CD14-positive monocyte (primary cell): ENCODE measurements at regions of chr22 and their contacts with region 1.

Region 1: GRCh38 chr22:30212363-30212995 is 34.1 kb downstream of the LIF start:
- DNase-seq: peak; percentile 92 to 97 (median 95)
- H3K4me3 ChIP-seq: peak overlapping the region in 1 of 3 experiments; percentile 41
- H3K4me3 Mint-ChIP-seq: peak overlapping the region in 1 of 2 donors; percentile 55
- H3K27ac ChIP-seq: peak overlapping the region; percentile 86 to 94
- H3K27ac Mint-ChIP-seq: peak overlapping the region; percentile 97 to 98 (median 97)
- H3K4me1 ChIP-seq: peaks cover 25 to 39% of the 10 kb centered on the region in 2 donors
- H3K4me1 Mint-ChIP-seq: peaks cover 46% of the 10 kb centered on the region
- H3K27me3 ChIP-seq: no peaks in the 10 kb centered on the region
- H3K27me3 Mint-ChIP-seq: peaks cover 6 to 18% (median 10%) of the 10 kb centered on the region in 3 donors
- CTCF ChIP-seq: no peak

Region 2: DNA sequence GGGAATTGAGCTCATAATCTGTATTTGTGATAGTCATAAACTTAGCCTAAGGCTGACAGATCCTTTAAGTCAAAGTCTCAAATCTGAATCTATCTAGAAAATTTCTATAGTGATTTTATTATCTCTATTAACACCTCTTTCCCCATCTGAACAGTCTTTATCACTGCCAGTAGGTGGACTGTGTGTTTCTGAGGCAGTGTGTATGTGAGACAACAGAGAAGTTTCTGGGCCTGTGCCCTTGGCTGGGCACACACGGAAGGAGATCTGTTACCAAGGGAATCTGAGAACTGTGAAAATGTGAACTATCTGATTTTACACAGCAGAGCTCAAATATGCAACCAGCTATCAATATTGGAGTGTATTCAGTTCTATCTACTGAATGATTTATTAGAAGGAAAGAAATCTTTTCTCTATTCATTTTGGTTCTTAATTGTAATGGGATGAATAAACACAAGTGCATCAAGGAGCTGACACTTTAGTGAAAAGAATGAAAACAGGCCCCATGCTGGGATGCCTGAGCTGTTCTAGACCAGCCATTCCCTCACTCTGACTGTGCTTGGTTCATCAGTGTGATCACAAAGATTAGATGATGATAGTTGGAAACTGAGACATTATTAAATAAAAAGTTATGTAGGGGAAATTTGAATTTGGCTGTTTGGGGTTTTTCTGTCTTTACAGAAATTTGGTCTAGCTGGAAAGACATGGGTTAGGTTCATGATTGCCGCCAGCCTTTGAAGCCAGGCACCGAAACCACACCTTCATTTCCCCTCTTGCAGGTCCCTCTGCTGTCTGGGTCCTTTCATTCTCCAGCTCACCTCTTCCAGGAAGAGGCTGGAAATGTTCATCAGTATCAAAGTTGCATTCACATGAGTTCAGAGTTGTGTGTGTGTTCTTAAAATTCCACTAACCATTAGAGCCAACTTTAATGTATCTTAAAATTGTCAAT is 34.0 kb before region 1 on chr22:
- intact Hi-C with region 1: loop called (anchors 5 kb)
- DNase-seq: no peak
- H3K4me3 ChIP-seq: no peak overlapping the region
- H3K4me3 Mint-ChIP-seq: no peak overlapping the region
- H3K27ac ChIP-seq: no peak overlapping the region
- H3K27ac Mint-ChIP-seq: peak overlapping the region in 2 of 7 donors; percentile 37 to 48
- H3K4me1 ChIP-seq: peaks cover 0 to 2% of the 10 kb centered on the region in 2 donors
- H3K4me1 Mint-ChIP-seq: peaks cover 11% of the 10 kb centered on the region
- H3K27me3 ChIP-seq: no peaks in the 10 kb centered on the region
- H3K27me3 Mint-ChIP-seq: peaks cover 0 to 5% (median 3%) of the 10 kb centered on the region in 3 donors
- CTCF ChIP-seq: no peak

Region 3: DNA sequence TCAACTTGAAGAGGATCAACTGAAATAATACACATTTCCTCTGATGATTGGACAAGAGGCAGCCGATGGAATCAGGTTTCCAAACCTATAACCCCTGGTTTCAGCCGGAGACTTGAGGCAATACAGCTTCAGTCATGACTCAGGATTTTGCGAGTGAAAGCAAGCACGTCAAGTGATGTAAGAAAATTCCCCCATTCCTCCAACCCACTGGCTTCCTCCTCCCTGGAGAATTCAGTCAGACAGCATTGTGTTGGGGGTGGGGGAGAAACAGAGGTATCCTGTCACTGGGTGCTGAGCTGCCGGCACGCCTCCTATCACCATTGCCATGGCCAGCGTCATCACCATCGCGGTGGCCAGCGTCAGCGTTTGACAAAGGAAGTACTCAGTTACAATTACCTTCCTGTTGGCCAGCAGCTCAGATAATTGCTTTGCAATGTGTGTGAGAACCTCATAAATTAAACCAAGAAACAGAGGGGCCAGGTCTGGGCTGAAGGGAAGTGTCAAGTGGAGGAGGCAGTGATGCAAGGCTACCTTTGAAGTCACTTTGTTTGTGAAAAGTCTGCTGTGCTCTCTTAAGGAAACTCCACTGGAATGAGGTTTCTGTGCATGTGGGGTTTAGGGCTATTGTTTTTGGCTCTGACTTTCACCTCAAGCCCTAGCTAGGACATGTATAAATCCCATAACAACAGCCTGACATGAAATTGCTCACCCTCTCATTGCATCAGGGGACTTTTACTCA is 16.2 kb before region 1 on chr22:
- intact Hi-C with region 1: loop called (anchors 2 kb)
- DNase-seq: peak; percentile 99 to 100 (median 99)
- H3K4me3 ChIP-seq: peak overlapping the region in 1 of 3 experiments; percentile 23
- H3K4me3 Mint-ChIP-seq: peak overlapping the region in 1 of 2 donors; percentile 84
- H3K27ac ChIP-seq: peak overlapping the region; percentile 87 to 96
- H3K27ac Mint-ChIP-seq: peak overlapping the region; percentile 95 to 99 (median 98)
- H3K4me1 ChIP-seq: peaks cover 53 to 54% of the 10 kb centered on the region in 2 donors
- H3K4me1 Mint-ChIP-seq: peaks cover 58% of the 10 kb centered on the region
- H3K27me3 ChIP-seq: no peaks in the 10 kb centered on the region
- H3K27me3 Mint-ChIP-seq: peaks cover 0 to 4% (median 4%) of the 10 kb centered on the region in 3 donors
- CTCF ChIP-seq: no peak

Region 4: DNA sequence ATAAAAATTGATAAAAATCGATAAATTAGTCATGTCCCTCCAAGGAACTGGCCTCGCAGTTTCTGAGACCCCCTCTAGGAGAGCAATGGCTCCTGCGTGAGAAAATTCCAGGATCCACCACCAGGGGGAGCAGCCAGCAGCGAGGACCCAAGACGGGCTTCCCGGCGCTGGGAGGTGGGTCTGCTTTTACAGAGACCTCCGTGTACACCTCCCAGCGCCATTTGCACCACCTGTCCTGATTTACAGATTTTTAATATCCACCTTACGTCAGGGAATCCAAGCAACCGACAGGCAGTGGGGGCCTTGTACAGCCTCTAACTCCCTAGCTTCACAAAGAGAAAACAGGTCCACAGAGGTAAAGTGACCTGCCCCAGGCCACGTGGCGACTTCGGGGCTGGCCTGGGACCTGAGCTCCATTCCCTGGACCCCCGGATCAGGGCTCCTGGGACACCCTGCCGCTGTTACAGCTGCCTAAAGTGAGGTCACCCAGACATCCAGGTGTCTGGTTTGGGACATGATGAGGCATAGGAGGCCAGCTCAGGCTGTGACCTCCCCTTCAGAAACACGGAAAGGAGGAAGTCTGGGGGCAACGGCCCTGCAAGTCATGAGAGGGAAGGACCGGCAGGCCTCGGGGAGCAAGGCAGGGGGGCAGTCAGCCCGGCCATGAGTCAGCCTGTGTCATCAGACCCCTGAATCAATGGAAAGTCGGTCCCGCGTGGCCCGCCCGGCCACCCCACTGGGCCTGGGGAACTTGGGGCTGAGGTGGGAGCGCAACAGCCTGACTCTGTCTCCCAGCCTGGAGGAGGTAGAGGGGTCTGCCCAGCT is 50.6 kb after region 1 on chr22:
- intact Hi-C with region 1: loop called (anchors 2 to 5 kb)
- DNase-seq: peak; percentile 98 to 100 (median 98)
- H3K4me3 ChIP-seq: peak overlapping the region in 1 of 3 experiments; percentile 56
- H3K4me3 Mint-ChIP-seq: peak overlapping the region; percentile 78 to 94
- H3K27ac ChIP-seq: peak overlapping the region; percentile 34 to 82
- H3K27ac Mint-ChIP-seq: peak overlapping the region; percentile 76 to 99 (median 99)
- H3K4me1 ChIP-seq: peaks cover 75 to 79% of the 10 kb centered on the region in 2 donors
- H3K4me1 Mint-ChIP-seq: peaks cover 73% of the 10 kb centered on the region
- H3K27me3 ChIP-seq: no peaks in the 10 kb centered on the region
- H3K27me3 Mint-ChIP-seq: peaks cover 12 to 16% (median 12%) of the 10 kb centered on the region in 3 donors
- CTCF ChIP-seq: peak; percentile 100

Region 5: GRCh38 chr22:30386608-30386959 is 174.1 kb after region 1 on chr22:
- intact Hi-C with region 1: no loop called
- DNase-seq: no peak
- H3K4me3 ChIP-seq: peak overlapping the region; percentile 14 to 75 (median 51)
- H3K4me3 Mint-ChIP-seq: peak overlapping the region; percentile 82 to 88
- H3K27ac ChIP-seq: no peak overlapping the region
- H3K27ac Mint-ChIP-seq: peak overlapping the region in 5 of 7 donors; percentile 60 to 85 (median 80)
- H3K4me1 ChIP-seq: peaks cover 10% of the 10 kb centered on the region in 2 donors
- H3K4me1 Mint-ChIP-seq: peaks cover 14% of the 10 kb centered on the region
- H3K27me3 ChIP-seq: no peaks in the 10 kb centered on the region
- H3K27me3 Mint-ChIP-seq: peaks cover 1 to 8% (median 4%) of the 10 kb centered on the region in 3 donors
- CTCF ChIP-seq: no peak